A673 (cell line): ENCODE measurements at regions of chr9 and their contacts with region 1.

Region 1: GRCh38 chr9:33024966-33025571 is at the start of gene DNAJA1:
- DNase-seq: peak; percentile 97
- H3K4me3 ChIP-seq: peak within 1 kb of the TSS; percentile 94
- H3K27ac ChIP-seq: peak within 1 kb of the TSS; percentile 99
- H3K4me1 ChIP-seq: peaks cover 29% of the 10 kb centered on the region
- H3K27me3 ChIP-seq: no peaks in the 10 kb centered on the region
- CTCF ChIP-seq: no peak
- total RNA-seq, gene DNAJA1: 296 and 373 TPM in 2 replicates

Region 2: GRCh38 chr9:33065157-33066076 is 40.3 kb after region 1 on chr9:
- CTCF ChIA-PET with region 1: no interaction called
- POLR2A ChIA-PET with region 1: interaction called, 14 read pairs
- intact Hi-C with region 1: no loop called
- DNase-seq: no peak
- H3K4me3 ChIP-seq: no peak overlapping the region
- H3K27ac ChIP-seq: no peak overlapping the region
- H3K4me1 ChIP-seq: no peaks in the 10 kb centered on the region
- H3K27me3 ChIP-seq: no peaks in the 10 kb centered on the region
- CTCF ChIP-seq: no peak

Region 3: DNA sequence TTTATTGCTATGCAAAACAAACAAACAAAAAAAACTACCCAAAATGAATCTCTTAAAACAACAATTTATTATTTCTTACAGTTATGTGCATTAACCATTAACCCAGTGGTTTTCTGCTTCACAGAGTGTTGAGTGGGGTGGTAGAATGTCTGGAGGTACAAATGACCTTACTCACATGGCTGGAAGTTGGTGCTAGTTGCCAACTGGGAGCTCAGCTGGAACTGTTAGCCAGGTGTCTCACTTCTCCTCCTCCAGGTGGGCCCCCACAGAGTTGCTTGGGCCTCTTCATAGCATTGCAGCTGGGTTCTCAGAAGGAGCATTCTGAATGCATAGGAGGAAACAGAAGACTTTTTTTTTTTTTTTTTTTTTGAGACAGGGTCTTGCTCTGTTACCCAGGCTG is 152.6 kb after region 1 on chr9:
- CTCF ChIA-PET with region 1: no interaction called
- POLR2A ChIA-PET with region 1: no interaction called
- intact Hi-C with region 1: no loop called
- DNase-seq: no peak
- H3K4me3 ChIP-seq: no peak overlapping the region
- H3K27ac ChIP-seq: no peak overlapping the region
- H3K4me1 ChIP-seq: no peaks in the 10 kb centered on the region
- H3K27me3 ChIP-seq: no peaks in the 10 kb centered on the region
- CTCF ChIP-seq: no peak